Posterior vena cava (tissue), 2 donors: ENCODE measurements at regions of chr15 and their contacts with region 1.

Region 1: GRCh38 chr15:69536726-69537512 is 84.3 kb downstream of the RPLP1 start:
- DNase-seq: peak; percentile 28

Region 2: DNA sequence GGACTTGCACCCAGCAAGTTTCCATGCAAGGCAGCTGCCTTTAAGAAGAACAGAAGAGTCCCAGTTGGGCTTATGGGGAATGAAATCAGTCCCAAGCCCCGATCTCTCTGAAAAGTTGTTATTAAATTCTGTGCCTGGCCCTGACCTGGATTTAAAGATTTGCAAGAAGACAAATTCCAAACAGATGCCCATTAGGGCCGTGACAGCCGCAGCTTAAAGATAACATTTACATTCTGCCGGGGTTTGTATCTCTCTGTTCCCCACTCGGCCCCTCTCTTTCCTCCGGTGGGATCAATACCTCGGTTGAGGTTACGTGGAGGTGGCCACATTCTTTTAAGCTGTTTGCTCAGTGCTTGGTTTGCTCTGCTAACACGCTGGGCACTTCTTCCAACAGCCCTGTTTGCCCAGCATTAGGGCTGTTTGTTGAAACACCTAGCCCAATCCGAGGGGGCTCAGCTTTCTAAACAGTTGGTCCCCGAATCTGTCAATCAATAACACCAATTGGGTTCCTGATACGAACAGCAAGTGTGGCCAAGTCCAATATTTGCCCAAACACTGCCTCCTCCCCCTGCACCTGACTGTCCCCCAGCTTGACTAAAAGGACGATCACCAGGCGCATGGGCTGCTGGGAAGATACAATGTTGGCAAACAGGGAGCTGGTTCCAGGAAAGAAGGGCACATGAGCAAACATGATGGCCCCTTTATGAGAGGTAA is 24.3 kb after region 1 on chr15:
- intact Hi-C with region 1: loop called in 1 of 2 experiments (anchors 1 kb)
- DNase-seq: peak; percentile 16